Endothelial cell of umbilical vein (primary cell): ENCODE measurements at regions of chr4 and their contacts with region 1.

Region 1: DNA sequence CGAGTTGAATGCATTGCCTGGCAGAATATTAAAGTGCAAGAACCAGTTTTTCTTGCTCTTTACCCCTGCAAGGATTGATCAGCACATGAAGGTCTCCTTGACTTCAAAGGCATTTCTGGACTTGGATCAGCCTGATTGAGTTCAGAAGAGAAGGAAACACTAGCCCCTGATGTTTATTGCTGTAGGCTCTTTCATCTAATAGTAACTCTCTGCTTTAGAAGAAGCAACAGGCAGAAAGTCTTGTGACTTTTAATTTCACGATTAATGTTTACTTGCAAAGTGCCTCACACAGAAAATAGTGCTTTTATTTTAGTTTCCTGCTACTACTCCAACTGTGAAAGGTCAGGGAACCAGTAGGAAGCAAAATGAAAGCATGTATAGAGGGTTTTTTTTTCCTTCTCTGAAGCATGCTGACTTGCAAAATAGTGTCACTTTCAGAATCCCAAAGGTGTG is 69.1 kb downstream of the PCDH7 start:
- DNase-seq: peak; percentile 45
- H3K4me3 ChIP-seq: no peak overlapping the region
- H3K27ac ChIP-seq: no peak overlapping the region
- H3K4me1 ChIP-seq: no peaks in the 10 kb centered on the region
- H3K27me3 ChIP-seq: no peaks in the 10 kb centered on the region
- CTCF ChIP-seq: no peak
- POLR2A ChIP-seq: no peak

Region 2: GRCh38 chr4:30776921-30777415 is 12.3 kb before region 1 on chr4:
- CTCF ChIA-PET with region 1: no interaction called
- POLR2A ChIA-PET with region 1: interaction called, 3 read pairs
- dilution Hi-C with region 1: no loop called
- intact Hi-C with region 1: loop called (anchors 1 kb)
- DNase-seq: peak; percentile 47
- H3K4me3 ChIP-seq: no peak overlapping the region
- H3K27ac ChIP-seq: no peak overlapping the region
- H3K4me1 ChIP-seq: no peaks in the 10 kb centered on the region
- H3K27me3 ChIP-seq: no peaks in the 10 kb centered on the region
- CTCF ChIP-seq: no peak
- POLR2A ChIP-seq: no peak